ENCODE measurements at regions of chr16 and their contacts with region 1.

Region 1: GRCh38 chr16:84738255-84739038 is 38.6 kb downstream of the USP10 start:
- DNase-seq: peak; percentile 82
- ATAC-seq: peak; percentile 70
- H3K4me3 Mint-ChIP-seq: no peak overlapping the region
- H3K27ac Mint-ChIP-seq: 0 out of 2 replicates have a peak overlapping the region, but pooled peaks have one; percentile 89
- H3K4me1 Mint-ChIP-seq: peaks cover 88% of the 10 kb centered on the region
- H3K27me3 Mint-ChIP-seq: no peaks in the 10 kb centered on the region
- CTCF ChIP-seq: peak; percentile 97

Region 2: GRCh38 chr16:84607694-84608093 is 130.8 kb before region 1 on chr16:
- CTCF ChIA-PET with region 1: no interaction called
- POLR2A ChIA-PET with region 1: no interaction called
- DNase-seq: no peak
- ATAC-seq: no peak
- H3K4me3 Mint-ChIP-seq: no peak overlapping the region
- H3K27ac Mint-ChIP-seq: no peak overlapping the region
- H3K4me1 Mint-ChIP-seq: peaks cover 21% of the 10 kb centered on the region
- H3K27me3 Mint-ChIP-seq: no peaks in the 10 kb centered on the region
- CTCF ChIP-seq: no peak

Region 3: GRCh38 chr16:84617791-84618580 is 120.5 kb before region 1 on chr16 and contains the start of gene COTL1:
- CTCF ChIA-PET with region 1: interaction called, 31 read pairs
- POLR2A ChIA-PET with region 1: no interaction called
- DNase-seq: peak; percentile 95
- ATAC-seq: peak; percentile 67
- H3K4me3 Mint-ChIP-seq: peak within 1 kb of the TSS; percentile 96
- H3K27ac Mint-ChIP-seq: peak within 1 kb of the TSS; percentile 77
- H3K4me1 Mint-ChIP-seq: peaks cover 48% of the 10 kb centered on the region
- H3K27me3 Mint-ChIP-seq: peaks cover 11% of the 10 kb centered on the region
- CTCF ChIP-seq: no peak
- total RNA-seq, gene COTL1: 102 to 122 TPM (median 122 TPM) in 3 replicates

Region 4: DNA sequence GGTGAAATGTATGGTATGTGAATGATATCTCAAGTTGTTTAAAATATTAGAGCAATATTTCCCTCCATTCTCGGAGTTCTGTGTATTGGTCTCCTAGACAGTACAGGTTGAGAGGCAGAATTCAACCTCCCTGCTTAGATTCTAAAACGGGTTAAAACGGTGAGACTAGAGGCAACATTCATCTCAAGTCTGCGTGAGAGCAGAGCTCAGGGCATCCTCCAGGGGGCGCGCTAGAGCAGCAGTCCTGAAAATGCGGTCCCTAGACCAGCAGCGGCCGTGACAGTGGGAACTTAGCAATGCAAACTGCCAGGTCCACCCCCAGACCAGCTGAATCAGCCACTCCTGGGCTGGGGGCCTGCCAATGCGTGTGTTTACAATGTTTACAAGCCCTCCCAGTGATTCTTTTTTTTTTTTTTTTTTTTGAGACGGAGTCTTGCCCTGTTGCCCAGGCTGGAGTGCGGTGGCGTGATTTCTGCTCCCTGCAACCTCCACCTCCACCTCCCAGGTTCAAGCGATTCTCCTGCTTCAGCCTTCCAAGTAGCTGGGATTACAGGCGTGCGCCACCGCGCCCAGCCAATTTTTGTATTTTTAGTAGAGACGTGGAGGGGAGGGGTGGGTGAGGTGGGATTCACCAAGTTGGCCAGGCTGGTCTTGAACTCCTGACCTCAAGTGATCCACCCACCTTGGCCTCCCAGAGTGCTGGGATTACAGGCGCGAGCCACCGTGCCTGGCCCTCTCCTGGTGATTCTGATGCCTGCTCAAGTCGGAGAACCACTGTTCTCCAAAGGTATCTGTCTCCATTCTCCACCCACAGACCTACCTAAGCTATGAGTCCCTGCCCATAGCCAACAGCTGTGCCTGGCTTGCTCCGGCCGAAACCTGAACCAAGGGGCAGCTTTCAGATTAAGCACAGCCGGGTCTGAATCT is 65.9 kb before region 1 on chr16:
- CTCF ChIA-PET with region 1: interaction called, 20 read pairs
- POLR2A ChIA-PET with region 1: interaction called, 4 read pairs
- DNase-seq: peak; percentile 92
- ATAC-seq: peak; percentile 84
- H3K4me3 Mint-ChIP-seq: no peak overlapping the region
- H3K27ac Mint-ChIP-seq: peak overlapping the region; percentile 63
- H3K4me1 Mint-ChIP-seq: peaks cover 35% of the 10 kb centered on the region
- H3K27me3 Mint-ChIP-seq: no peaks in the 10 kb centered on the region
- CTCF ChIP-seq: peak; percentile 91

Region 5: DNA sequence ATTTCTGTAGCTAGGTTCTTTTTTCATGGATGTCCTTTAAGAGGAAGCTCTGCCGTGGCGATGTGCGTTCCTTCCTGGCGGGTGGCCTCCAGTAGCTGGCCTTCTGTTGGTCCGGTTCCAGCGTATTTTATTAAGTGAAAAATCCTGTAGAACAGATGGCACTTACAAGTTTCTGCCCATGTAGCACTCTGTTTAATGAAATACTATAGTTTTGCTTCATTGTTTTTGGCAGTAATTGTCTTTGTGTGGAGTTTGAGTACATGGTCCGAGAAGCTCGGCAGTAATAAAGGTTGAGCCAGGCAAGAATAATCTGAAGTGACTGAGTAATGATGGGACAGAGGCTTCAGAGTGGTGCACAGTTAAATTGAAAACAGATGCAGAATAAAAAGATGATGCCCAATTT is 18.3 kb before region 1 on chr16:
- CTCF ChIA-PET with region 1: interaction called, 86 read pairs
- POLR2A ChIA-PET with region 1: no interaction called
- DNase-seq: no peak
- ATAC-seq: no peak
- H3K4me3 Mint-ChIP-seq: no peak overlapping the region
- H3K27ac Mint-ChIP-seq: 0 out of 2 replicates have a peak overlapping the region, but pooled peaks have one; percentile 50
- H3K4me1 Mint-ChIP-seq: peaks cover 69% of the 10 kb centered on the region
- H3K27me3 Mint-ChIP-seq: no peaks in the 10 kb centered on the region
- CTCF ChIP-seq: no peak

Region 6: GRCh38 chr16:84819644-84820324 is 81.3 kb after region 1 on chr16 and contains the start of gene CRISPLD2:
- CTCF ChIA-PET with region 1: interaction called, 11 read pairs
- POLR2A ChIA-PET with region 1: no interaction called
- DNase-seq: peak; percentile 97
- ATAC-seq: peak; percentile 93
- H3K4me3 Mint-ChIP-seq: peak within 1 kb of the TSS; percentile 80
- H3K27ac Mint-ChIP-seq: no peak within 1 kb of the TSS
- H3K4me1 Mint-ChIP-seq: peaks cover 14% of the 10 kb centered on the region
- H3K27me3 Mint-ChIP-seq: peaks cover 50% of the 10 kb centered on the region
- CTCF ChIP-seq: no peak
- total RNA-seq, gene CRISPLD2: 8.7 to 9.5 TPM (median 9.4 TPM) in 3 replicates

Region 7: GRCh38 chr16:84881702-84882521 is 143.5 kb after region 1 on chr16:
- CTCF ChIA-PET with region 1: no interaction called
- POLR2A ChIA-PET with region 1: no interaction called
- DNase-seq: no peak
- ATAC-seq: no peak
- H3K4me3 Mint-ChIP-seq: no peak overlapping the region
- H3K27ac Mint-ChIP-seq: no peak overlapping the region
- H3K4me1 Mint-ChIP-seq: peaks cover 49% of the 10 kb centered on the region
- H3K27me3 Mint-ChIP-seq: peaks cover 2% of the 10 kb centered on the region; the same call in 1 of the 2 replicates
- CTCF ChIP-seq: no peak